WTC11 (cell line): ENCODE measurements at regions of chr7 and their contacts with region 1.

Region 1: DNA sequence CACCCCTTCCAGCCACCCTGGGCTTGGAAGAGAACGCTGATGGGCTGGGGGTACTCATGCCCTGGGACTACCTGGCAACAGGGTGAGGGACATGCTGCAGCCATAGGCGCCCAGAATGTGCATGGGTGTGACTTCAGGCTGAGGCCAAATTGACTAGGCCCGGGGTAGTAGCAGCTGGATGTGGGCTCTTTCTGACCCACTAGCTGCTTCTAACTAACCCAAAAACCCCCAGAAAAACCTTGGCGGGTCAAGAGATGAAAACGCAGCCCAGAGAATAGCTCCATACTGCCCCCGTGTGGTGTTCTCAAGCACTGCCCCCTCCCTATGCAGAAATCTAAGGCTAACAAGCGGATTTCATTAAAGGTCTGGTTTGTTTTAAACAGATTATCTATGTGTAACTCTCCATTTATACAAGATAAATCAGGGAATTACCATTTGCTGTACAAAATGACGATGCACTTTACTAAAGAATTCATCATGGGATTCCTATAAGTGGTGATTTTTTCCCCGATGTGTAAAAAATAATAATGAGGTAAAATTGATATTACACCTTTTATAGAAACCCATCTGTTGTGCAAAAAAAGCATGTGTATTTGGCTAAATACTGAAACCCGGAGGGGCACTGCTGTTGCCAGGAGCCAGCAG is 4.2 kb downstream of the SMARCD3 start:
- DNase-seq: peak; percentile 67
- ATAC-seq: peak; percentile 7; the same call in 1 of the 2 replicates
- H3K4me3 Mint-ChIP-seq: peak overlapping the region; percentile 65
- H3K27ac Mint-ChIP-seq: no peak overlapping the region
- H3K4me1 Mint-ChIP-seq: peaks cover 41% of the 10 kb centered on the region
- H3K27me3 Mint-ChIP-seq: peaks cover 43% of the 10 kb centered on the region
- CTCF ChIP-seq: peak; percentile 84

Region 2: GRCh38 chr7:151057989-151058780 is 186.1 kb before region 1 on chr7:
- CTCF ChIA-PET with region 1: interaction called, 10 read pairs
- POLR2A ChIA-PET with region 1: no interaction called
- DNase-seq: peak; percentile 98
- ATAC-seq: peak; percentile 79
- H3K4me3 Mint-ChIP-seq: peak overlapping the region; percentile 98
- H3K27ac Mint-ChIP-seq: peak overlapping the region; percentile 93
- H3K4me1 Mint-ChIP-seq: peaks cover 38% of the 10 kb centered on the region
- H3K27me3 Mint-ChIP-seq: peaks cover 7% of the 10 kb centered on the region
- CTCF ChIP-seq: no peak

Region 3: GRCh38 chr7:151174246-151175046 is 69.9 kb before region 1 on chr7:
- CTCF ChIA-PET with region 1: interaction called, 26 read pairs
- POLR2A ChIA-PET with region 1: no interaction called
- DNase-seq: peak; percentile 82
- ATAC-seq: peak; percentile 62
- H3K4me3 Mint-ChIP-seq: no peak overlapping the region
- H3K27ac Mint-ChIP-seq: no peak overlapping the region
- H3K4me1 Mint-ChIP-seq: peaks cover 12% of the 10 kb centered on the region
- H3K27me3 Mint-ChIP-seq: peaks cover 84% of the 10 kb centered on the region
- CTCF ChIP-seq: no peak

Region 4: DNA sequence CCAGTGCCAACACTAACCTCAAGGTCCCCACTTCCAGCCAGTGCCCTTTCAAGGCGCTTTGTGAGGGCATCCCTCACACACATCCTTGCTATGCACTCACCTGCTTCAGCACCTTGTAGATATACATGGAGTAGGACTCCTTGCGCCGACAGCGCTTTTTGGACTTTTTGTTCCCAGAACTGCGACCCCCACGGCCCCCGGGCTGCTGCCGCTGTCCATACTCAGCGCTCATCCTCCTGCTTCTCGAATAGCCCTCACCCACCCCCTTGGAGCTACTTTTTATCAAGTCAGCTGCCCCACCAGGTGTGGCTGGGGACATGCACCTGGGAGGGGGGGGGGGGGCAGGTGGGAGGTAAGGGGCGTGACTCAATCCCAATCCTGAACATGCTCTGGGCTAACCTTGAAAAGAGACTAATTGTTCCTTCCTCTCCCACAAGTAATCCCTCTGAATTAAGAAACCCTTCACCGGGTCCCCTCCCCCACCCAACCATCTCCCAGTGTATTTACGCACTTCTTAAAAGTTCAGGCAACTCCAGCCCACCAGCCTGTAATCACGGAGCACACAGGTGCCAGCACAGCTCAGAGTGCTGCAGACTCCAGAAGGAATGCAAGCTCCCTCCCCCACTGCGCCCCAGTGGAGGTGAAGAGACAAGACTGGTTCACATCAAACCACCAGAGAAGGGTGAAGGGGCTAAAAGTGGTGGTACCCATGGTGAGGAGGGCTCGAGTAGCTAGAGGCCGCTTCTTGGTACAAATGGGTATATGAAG is 34.0 kb before region 1 on chr7 and contains the start of gene H2BK1:
- CTCF ChIA-PET with region 1: interaction called, 22 read pairs
- POLR2A ChIA-PET with region 1: no interaction called
- DNase-seq: peak; percentile 53
- ATAC-seq: peak; percentile 66
- H3K4me3 Mint-ChIP-seq: no peak within 1 kb of the TSS
- H3K27ac Mint-ChIP-seq: peak within 1 kb of the TSS; percentile 69; the same call in 1 of the 2 replicates
- H3K4me1 Mint-ChIP-seq: peaks cover 12% of the 10 kb centered on the region
- H3K27me3 Mint-ChIP-seq: no peaks in the 10 kb centered on the region; the same call in 1 of the 2 replicates
- CTCF ChIP-seq: no peak
- total RNA-seq, gene H2BK1: 0.87 TPM in 1 of 3 replicates, not detected in the others

Region 5: GRCh38 chr7:151232091-151232916 is 12.0 kb before region 1 on chr7 and contains the start of gene CHPF2:
- CTCF ChIA-PET with region 1: interaction called, 83 read pairs
- POLR2A ChIA-PET with region 1: interaction called, 6 read pairs
- DNase-seq: peak; percentile 86
- ATAC-seq: peak; percentile 85
- H3K4me3 Mint-ChIP-seq: peak within 1 kb of the TSS; percentile 99
- H3K27ac Mint-ChIP-seq: peak within 1 kb of the TSS; percentile 91
- H3K4me1 Mint-ChIP-seq: peaks cover 24% of the 10 kb centered on the region
- H3K27me3 Mint-ChIP-seq: no peaks in the 10 kb centered on the region
- CTCF ChIP-seq: no peak
- total RNA-seq, gene CHPF2: 25.0 to 30.7 TPM (median 26.3 TPM) in 3 replicates

Region 6: GRCh38 chr7:151304856-151305255 is 60.5 kb after region 1 on chr7:
- CTCF ChIA-PET with region 1: interaction called, 39 read pairs
- POLR2A ChIA-PET with region 1: no interaction called
- DNase-seq: no peak
- ATAC-seq: peak; percentile 71
- H3K4me3 Mint-ChIP-seq: peak overlapping the region; percentile 73
- H3K27ac Mint-ChIP-seq: peak overlapping the region; percentile 95
- H3K4me1 Mint-ChIP-seq: peaks cover 14% of the 10 kb centered on the region
- H3K27me3 Mint-ChIP-seq: peaks cover 23% of the 10 kb centered on the region
- CTCF ChIP-seq: no peak

Region 7: DNA sequence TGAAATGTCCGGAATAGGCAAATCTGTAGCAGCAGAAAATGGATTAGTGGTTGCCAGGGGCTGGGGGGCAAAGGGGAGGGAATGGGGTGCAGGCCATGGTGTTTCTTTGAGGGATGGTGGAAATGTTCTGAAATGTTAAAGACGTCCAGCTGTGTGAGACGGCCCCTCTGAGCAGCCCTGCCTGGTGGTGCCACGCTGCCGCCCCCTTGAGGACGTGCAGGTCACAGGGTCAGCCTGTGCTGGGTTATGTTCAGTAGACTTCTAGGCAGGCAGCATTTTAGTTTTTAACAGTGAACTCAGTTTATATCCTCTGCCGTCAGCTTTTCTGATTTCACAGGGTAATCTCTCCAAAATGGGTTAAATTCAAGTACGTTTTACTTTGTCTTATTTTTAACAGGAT is 106.7 kb after region 1 on chr7:
- CTCF ChIA-PET with region 1: interaction called, 11 read pairs
- POLR2A ChIA-PET with region 1: no interaction called
- DNase-seq: peak; percentile 75
- ATAC-seq: peak; percentile 96
- H3K4me3 Mint-ChIP-seq: no peak overlapping the region
- H3K27ac Mint-ChIP-seq: no peak overlapping the region
- H3K4me1 Mint-ChIP-seq: no peaks in the 10 kb centered on the region
- H3K27me3 Mint-ChIP-seq: no peaks in the 10 kb centered on the region
- CTCF ChIP-seq: peak; percentile 53

Region 8: GRCh38 chr7:152660021-152660420 is 1415.7 kb after region 1 on chr7:
- CTCF ChIA-PET with region 1: no interaction called
- POLR2A ChIA-PET with region 1: no interaction called
- DNase-seq: no peak
- ATAC-seq: no peak
- H3K4me3 Mint-ChIP-seq: no peak overlapping the region
- H3K27ac Mint-ChIP-seq: no peak overlapping the region
- H3K4me1 Mint-ChIP-seq: 0 out of 2 replicates have a peak, but pooled peaks cover 3% of the 10 kb centered on the region
- H3K27me3 Mint-ChIP-seq: no peaks in the 10 kb centered on the region
- CTCF ChIP-seq: no peak